ENCODE measurements at regions of chr15 and their contacts with region 1.

Region 1: DNA sequence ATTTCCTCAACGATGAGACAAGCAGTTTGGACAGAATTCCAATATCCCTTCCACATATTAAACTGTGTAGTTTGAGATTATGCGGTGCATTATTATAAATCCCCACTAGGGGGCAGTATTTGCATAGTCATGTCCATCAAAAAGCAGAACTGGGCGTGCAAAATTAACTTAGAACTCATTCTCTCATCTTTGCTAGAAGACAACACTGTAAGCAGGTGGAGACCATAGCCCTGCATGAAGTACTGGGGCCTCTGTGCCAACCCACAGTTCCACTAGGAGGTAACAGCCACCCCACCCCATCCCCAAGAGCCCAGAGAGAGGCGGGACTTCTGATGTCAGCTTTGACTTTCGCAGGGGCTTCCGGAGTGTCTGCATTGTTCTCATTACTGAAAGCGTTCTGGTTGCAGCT is 106.6 kb upstream of the TMC3 start:
- DNase-seq: peak; percentile 62
- H3K4me3 Mint-ChIP-seq: no peak overlapping the region
- H3K27ac Mint-ChIP-seq: no peak overlapping the region
- H3K4me1 Mint-ChIP-seq: no peaks in the 10 kb centered on the region
- H3K27me3 Mint-ChIP-seq: no peaks in the 10 kb centered on the region
- CTCF ChIP-seq: peak; percentile 79

Region 2: GRCh38 chr15:81410318-81410753 is 70.3 kb before region 1 on chr15:
- CTCF ChIA-PET with region 1: interaction called, 12 read pairs
- POLR2A ChIA-PET with region 1: no interaction called
- intact Hi-C with region 1: loop called (anchors 2 kb)
- DNase-seq: peak; percentile 82
- H3K4me3 Mint-ChIP-seq: no peak overlapping the region
- H3K27ac Mint-ChIP-seq: peak overlapping the region; percentile 31
- H3K4me1 Mint-ChIP-seq: peaks cover 13% of the 10 kb centered on the region
- H3K27me3 Mint-ChIP-seq: peaks cover 12% of the 10 kb centered on the region
- CTCF ChIP-seq: peak; percentile 48

Region 3: GRCh38 chr15:81809543-81809942 is 328.9 kb after region 1 on chr15:
- CTCF ChIA-PET with region 1: interaction called, 4 read pairs
- POLR2A ChIA-PET with region 1: no interaction called
- intact Hi-C with region 1: loop called (anchors 2 kb)
- DNase-seq: peak; percentile 24
- H3K4me3 Mint-ChIP-seq: no peak overlapping the region
- H3K27ac Mint-ChIP-seq: no peak overlapping the region
- H3K4me1 Mint-ChIP-seq: no peaks in the 10 kb centered on the region
- H3K27me3 Mint-ChIP-seq: no peaks in the 10 kb centered on the region
- CTCF ChIP-seq: no peak

Region 4: GRCh38 chr15:82046666-82047452 is 566.2 kb after region 1 on chr15:
- CTCF ChIA-PET with region 1: interaction called, 4 read pairs
- POLR2A ChIA-PET with region 1: interaction called, 3 read pairs
- intact Hi-C with region 1: loop called (anchors 1 kb)
- DNase-seq: peak; percentile 87
- H3K4me3 Mint-ChIP-seq: peak overlapping the region; percentile 91
- H3K27ac Mint-ChIP-seq: no peak overlapping the region
- H3K4me1 Mint-ChIP-seq: no peaks in the 10 kb centered on the region
- H3K27me3 Mint-ChIP-seq: peaks cover 18% of the 10 kb centered on the region
- CTCF ChIP-seq: peak; percentile 52

Region 5: DNA sequence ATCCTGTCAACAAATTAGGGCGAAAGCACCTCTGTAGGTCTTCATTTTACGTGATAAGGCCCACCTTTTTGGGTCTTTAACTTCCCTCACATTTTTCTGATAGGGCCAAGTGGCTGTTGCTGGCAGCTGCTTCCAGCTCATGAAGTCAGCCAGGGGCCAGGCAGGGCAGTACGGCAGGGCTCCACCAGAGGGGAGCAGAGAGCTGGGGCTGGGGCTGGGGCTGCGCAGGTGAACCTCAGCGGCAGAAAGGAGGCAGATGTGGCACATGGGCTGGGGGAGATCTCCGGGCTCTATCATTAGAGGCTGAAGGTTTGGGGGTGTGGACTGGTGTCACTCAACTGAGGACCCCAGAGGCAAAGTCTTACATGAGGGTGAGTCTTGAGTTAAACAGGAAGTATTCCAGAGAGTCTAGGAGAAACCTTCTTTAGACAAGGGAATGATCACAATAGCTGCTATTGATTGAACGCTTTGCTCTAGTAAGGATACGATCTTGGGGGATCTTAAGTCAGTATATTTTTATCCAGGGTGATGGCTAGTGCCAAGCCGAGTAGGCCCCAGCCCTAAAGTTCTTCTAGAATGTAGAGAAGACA is 627.9 kb after region 1 on chr15:
- CTCF ChIA-PET with region 1: interaction called, 7 read pairs
- POLR2A ChIA-PET with region 1: no interaction called
- intact Hi-C with region 1: loop called (anchors 1 kb)
- DNase-seq: peak; percentile 69
- H3K4me3 Mint-ChIP-seq: no peak overlapping the region
- H3K27ac Mint-ChIP-seq: no peak overlapping the region
- H3K4me1 Mint-ChIP-seq: peaks cover 13% of the 10 kb centered on the region
- H3K27me3 Mint-ChIP-seq: no peaks in the 10 kb centered on the region
- CTCF ChIP-seq: peak; percentile 98

Region 6: GRCh38 chr15:82197733-82198594 is 717.3 kb after region 1 on chr15:
- CTCF ChIA-PET with region 1: interaction called, 5 read pairs
- POLR2A ChIA-PET with region 1: no interaction called
- intact Hi-C with region 1: loop called (anchors 1 kb)
- DNase-seq: peak; percentile 82
- H3K4me3 Mint-ChIP-seq: no peak overlapping the region
- H3K27ac Mint-ChIP-seq: no peak overlapping the region
- H3K4me1 Mint-ChIP-seq: peaks cover 6% of the 10 kb centered on the region
- H3K27me3 Mint-ChIP-seq: no peaks in the 10 kb centered on the region
- CTCF ChIP-seq: peak; percentile 83